ENCODE measurements at regions of chr3 and their contacts with region 1.

Region 1: DNA sequence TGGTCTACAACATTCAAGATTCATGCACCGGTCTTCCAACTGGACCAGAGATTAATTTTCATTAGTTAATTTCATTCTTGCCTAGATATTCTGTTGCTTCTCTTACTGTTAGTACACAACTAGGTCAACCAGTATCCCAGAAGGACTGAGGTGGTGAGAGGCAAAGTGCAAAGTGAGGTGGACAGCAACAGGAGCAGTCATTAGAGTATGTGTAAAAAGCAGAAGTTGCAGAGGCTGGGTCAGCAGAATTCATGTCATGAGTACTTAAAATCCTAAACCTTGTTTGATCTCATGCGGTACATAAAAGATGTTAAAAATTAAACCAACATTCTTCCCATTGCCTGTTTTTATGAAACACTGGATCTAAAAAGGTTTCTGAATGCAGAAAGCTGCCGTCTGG is 46.7 kb downstream of the PARP14 start:
- DNase-seq: no peak
- H3K4me3 Mint-ChIP-seq: no peak overlapping the region
- H3K27ac Mint-ChIP-seq: no peak overlapping the region
- H3K4me1 Mint-ChIP-seq: no peaks in the 10 kb centered on the region
- H3K27me3 Mint-ChIP-seq: no peaks in the 10 kb centered on the region
- CTCF ChIP-seq: no peak

Region 2: DNA sequence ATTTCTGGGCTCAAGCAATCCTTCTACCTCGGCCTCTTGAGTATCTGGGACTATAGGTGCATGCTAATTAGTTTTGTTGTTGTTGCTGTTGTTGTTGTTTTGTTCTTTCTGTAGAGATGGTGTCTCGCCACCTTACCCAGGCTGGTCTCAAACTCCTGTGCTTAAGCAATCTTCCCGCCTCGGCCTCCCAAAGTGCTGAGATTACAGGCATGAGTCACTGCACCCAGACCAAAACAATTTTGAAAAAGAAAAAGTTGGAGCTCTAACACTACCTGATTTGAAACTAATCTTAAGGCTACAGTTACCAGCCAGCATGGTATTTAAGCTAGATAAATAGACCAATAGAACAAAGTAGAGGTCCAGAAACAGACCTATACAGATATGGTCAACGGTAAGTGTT is 242.3 kb before region 1 on chr3:
- CTCF ChIA-PET with region 1: no interaction called
- POLR2A ChIA-PET with region 1: no interaction called
- intact Hi-C with region 1: no loop called
- DNase-seq: peak; percentile 74
- H3K4me3 Mint-ChIP-seq: peak overlapping the region; percentile 47
- H3K27ac Mint-ChIP-seq: peak overlapping the region; percentile 86
- H3K4me1 Mint-ChIP-seq: peaks cover 31% of the 10 kb centered on the region
- H3K27me3 Mint-ChIP-seq: no peaks in the 10 kb centered on the region
- CTCF ChIP-seq: no peak

Region 3: DNA sequence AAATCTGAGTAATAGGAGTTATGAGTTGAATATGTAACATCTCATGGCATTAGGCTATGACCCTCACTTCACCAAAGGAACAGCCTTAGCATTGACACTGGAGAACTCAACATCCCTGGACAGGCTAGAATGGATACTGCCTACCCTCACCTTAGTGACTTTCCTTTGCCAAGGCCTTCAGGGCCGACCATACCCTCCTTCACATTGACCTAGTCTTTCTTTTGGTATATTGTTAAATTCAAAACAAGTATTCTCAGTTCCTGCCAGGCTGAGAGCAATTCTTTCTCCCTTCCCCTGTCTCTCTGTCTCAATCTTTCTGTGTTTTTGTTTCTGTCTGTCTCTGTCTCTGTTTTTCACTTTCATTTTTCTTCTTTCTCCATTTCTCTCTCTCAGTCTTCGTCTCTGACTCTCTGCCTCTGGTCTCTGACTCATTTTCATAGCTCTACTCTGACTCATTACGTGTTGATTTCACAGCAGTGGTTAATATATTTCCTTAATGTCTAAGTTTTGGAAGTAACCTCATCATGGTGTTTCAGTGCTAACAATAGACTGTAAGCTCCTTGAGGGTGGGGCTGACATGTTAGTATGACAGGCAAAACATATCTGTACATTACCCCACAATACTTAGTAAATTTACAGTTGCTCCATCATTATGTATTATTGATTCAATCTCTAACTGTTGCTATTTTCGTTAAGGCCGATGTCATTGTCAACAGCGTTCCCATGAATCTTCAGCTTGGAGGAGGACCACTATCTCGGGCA is 117.3 kb before region 1 on chr3:
- CTCF ChIA-PET with region 1: no interaction called
- POLR2A ChIA-PET with region 1: no interaction called
- intact Hi-C with region 1: no loop called
- DNase-seq: peak; percentile 70
- H3K4me3 Mint-ChIP-seq: peak overlapping the region; percentile 33
- H3K27ac Mint-ChIP-seq: peak overlapping the region; percentile 96
- H3K4me1 Mint-ChIP-seq: peaks cover 7% of the 10 kb centered on the region
- H3K27me3 Mint-ChIP-seq: no peaks in the 10 kb centered on the region
- CTCF ChIP-seq: no peak

Region 4: DNA sequence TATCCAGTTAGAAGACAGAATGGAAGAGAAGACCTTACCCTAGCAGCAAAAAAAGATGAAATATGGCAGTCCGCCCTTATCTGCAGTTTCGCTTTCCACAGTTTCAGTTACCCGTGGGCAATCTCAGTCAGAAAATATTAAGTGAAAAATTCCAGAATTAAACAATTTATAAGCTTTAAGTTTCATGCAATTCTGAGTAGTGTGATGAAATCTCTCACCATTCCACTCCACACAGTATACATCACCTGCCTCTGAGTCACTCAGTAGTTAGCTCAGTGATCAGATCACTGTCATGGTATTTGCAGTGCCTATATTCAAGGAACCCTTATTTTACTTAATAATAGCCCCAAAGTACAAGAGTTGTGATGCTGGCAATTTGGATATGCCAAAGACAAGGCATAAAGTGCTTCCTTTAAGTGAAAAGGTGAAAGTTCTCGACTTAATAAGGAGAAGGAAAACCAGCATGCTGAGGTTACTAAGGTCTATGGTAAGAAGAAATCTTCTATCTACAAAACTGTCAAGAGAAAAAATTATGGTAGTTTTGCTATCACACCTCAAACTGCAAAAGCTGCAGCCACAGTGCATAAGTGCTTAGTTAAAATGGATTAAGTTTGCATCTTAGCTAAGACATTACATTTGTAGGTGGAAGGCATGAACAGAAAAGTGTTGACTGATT is 18.2 kb after region 1 on chr3:
- CTCF ChIA-PET with region 1: interaction called, 4 read pairs
- POLR2A ChIA-PET with region 1: interaction called, 12 read pairs
- intact Hi-C with region 1: no loop called
- DNase-seq: peak; percentile 59
- H3K4me3 Mint-ChIP-seq: peak overlapping the region; percentile 21
- H3K27ac Mint-ChIP-seq: peak overlapping the region; percentile 79
- H3K4me1 Mint-ChIP-seq: peaks cover 7% of the 10 kb centered on the region
- H3K27me3 Mint-ChIP-seq: no peaks in the 10 kb centered on the region
- CTCF ChIP-seq: no peak